Gastrocnemius medialis (tissue), 4 donors: ENCODE measurements at regions of chr14 and their contacts with region 1.

Region 1: GRCh38 chr14:91323671-91324605 is 79.4 kb upstream of the GPR68 start:
- DNase-seq: peak; percentile 56 to 71
- ATAC-seq: peak; percentile 79 to 81
- H3K4me3 ChIP-seq: peak overlapping the region; percentile 45 to 63 (median 50)
- H3K27ac ChIP-seq: peak overlapping the region; percentile 67 to 79 (median 74)
- H3K4me1 ChIP-seq: peaks cover 6 to 7% of the 10 kb centered on the region in 2 donors
- H3K27me3 ChIP-seq: no peaks in the 10 kb centered on the region
- CTCF ChIP-seq: peak; percentile 83 to 93 (median 89)
- POLR2A ChIP-seq: peak in 1 of 2 donors; percentile 18

Region 2: GRCh38 chr14:90871605-90872233 is 452.2 kb before region 1 on chr14:
- in situ Hi-C with region 1: no loop called
- intact Hi-C with region 1: no loop called
- DNase-seq: peak in 1 of 2 donors; percentile 21
- ATAC-seq: peak; percentile 95 to 97
- H3K4me3 ChIP-seq: peak overlapping the region in 1 of 4 donors; percentile 3
- H3K27ac ChIP-seq: peak overlapping the region in 3 of 4 donors; percentile 57 to 71 (median 62)
- H3K4me1 ChIP-seq: peaks cover 11 to 29% of the 10 kb centered on the region in 2 donors
- H3K27me3 ChIP-seq: no peaks in the 10 kb centered on the region
- CTCF ChIP-seq: no peak
- POLR2A ChIP-seq: no peak

Region 3: DNA sequence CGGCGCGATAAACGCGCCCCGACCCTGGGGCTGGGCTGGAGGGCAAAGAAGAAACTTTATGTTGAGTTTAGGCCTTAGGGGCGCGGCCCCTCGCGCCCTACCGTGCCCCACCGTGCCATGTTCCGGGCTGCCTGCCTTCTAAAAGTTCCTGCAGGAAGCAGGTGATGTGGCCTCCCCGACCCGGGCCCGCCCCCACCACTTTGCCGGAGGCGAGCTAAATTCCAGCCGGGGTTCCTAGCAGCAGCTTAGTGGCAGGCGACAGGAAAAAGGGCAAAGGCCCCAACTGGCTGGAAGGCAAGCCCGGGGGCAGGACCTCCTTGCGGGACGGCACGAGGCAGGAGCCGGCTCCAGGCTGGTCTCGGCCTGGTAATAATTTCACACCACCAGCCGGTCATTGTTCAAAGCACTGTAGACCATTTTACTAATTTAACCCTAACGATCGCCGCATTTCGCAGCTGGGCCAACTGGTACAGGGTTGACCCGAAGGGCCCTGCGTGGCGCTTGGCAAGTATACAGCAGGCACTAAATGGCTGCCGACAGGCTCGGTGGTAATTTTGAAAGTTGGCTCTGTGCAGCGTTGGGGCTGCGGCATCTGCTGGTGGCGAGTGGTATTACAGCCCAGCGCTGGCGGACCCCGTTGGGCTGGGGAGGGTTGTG is 94.6 kb after region 1 on chr14:
- in situ Hi-C with region 1: loop called in 3 of 4 experiments (anchors 10 kb)
- intact Hi-C with region 1: loop called (anchors 1 kb)
- DNase-seq: peak in 1 of 2 donors; percentile 28
- ATAC-seq: peak; percentile 64 to 69
- H3K4me3 ChIP-seq: peak overlapping the region; percentile 34 to 59 (median 50)
- H3K27ac ChIP-seq: peak overlapping the region in 1 of 4 donors; percentile 30
- H3K4me1 ChIP-seq: peaks cover 5 to 13% of the 10 kb centered on the region in 2 donors
- H3K27me3 ChIP-seq: peaks cover 11 to 17% (median 16%) of the 10 kb centered on the region in 3 donors
- CTCF ChIP-seq: peak; percentile 87 to 92 (median 91)
- POLR2A ChIP-seq: no peak